Prostate gland (tissue), 2 donors: ENCODE measurements at regions of chr6 and their contacts with region 1.

Region 1: DNA sequence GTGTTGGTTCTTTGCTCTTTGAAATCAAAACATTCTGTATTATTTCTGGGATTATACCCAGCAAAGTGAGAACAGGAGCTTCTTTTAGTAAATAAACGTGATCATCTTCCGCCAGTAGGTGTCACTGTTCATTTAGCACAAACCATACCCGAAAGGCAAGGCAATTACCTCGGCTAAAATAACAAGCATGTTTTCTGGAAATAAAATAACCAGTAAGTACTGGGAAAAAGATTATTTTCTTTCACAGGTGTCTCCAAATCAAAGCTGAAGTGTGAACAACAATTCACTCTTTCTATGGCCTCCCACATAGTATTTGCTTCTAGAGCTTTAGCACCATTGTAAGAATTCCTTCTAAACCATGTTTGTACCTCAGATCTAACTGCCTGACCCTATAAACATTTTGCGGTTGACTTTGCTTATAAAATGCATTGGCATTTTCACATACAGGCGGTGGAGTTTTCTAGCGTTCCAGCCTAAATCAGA is 144.6 kb upstream of the AGPAT4 start:
- DNase-seq: peak; percentile 72
- H3K4me3 ChIP-seq: no peak overlapping the region
- H3K27ac ChIP-seq: no peak overlapping the region
- H3K4me1 ChIP-seq: no peaks in the 10 kb centered on the region
- H3K27me3 ChIP-seq: no peaks in the 10 kb centered on the region
- CTCF ChIP-seq: peak; percentile 22 to 75 (median 66)
- POLR2A ChIP-seq: no peak

Region 2: GRCh38 chr6:161373905-161374451 is 44.5 kb before region 1 on chr6:
- intact Hi-C with region 1: no loop called
- DNase-seq: peak; percentile 61
- H3K4me3 ChIP-seq: no peak overlapping the region
- H3K27ac ChIP-seq: no peak overlapping the region
- H3K4me1 ChIP-seq: peaks cover 6% of the 10 kb centered on the region
- H3K27me3 ChIP-seq: no peaks in the 10 kb centered on the region
- CTCF ChIP-seq: peak; percentile 85 to 97 (median 92)
- POLR2A ChIP-seq: no peak

Region 3: GRCh38 chr6:161694995-161695394 is 276.5 kb after region 1 on chr6:
- intact Hi-C with region 1: loop called (anchors 10 kb)
- DNase-seq: no peak
- H3K4me3 ChIP-seq: no peak overlapping the region
- H3K27ac ChIP-seq: no peak overlapping the region
- H3K4me1 ChIP-seq: no peaks in the 10 kb centered on the region
- H3K27me3 ChIP-seq: no peaks in the 10 kb centered on the region
- CTCF ChIP-seq: no peak
- POLR2A ChIP-seq: no peak

Region 4: GRCh38 chr6:162736961-162737360 is 1318.5 kb after region 1 on chr6:
- intact Hi-C with region 1: loop called (anchors 10 kb)
- DNase-seq: no peak
- H3K4me3 ChIP-seq: no peak overlapping the region
- H3K27ac ChIP-seq: no peak overlapping the region
- H3K4me1 ChIP-seq: no peaks in the 10 kb centered on the region
- H3K27me3 ChIP-seq: no peaks in the 10 kb centered on the region
- CTCF ChIP-seq: peak in 1 of 4 experiments; percentile 20
- POLR2A ChIP-seq: no peak